IMR-90 (cell line): ENCODE measurements at regions of chr10 and their contacts with region 1.

Region 1: GRCh38 chr10:68301790-68302502 is 29.9 kb upstream of the HNRNPH3 start:
- DNase-seq: peak; percentile 75
- ATAC-seq: peak; percentile 97
- H3K4me3 ChIP-seq: no peak overlapping the region
- H3K27ac ChIP-seq: no peak overlapping the region
- H3K4me1 ChIP-seq: peaks cover 4% of the 10 kb centered on the region; the same call in 1 of the 2 replicates
- H3K27me3 ChIP-seq: no peaks in the 10 kb centered on the region
- CTCF ChIP-seq: peak; percentile 74
- POLR2A ChIP-seq: no peak
- RAD21 ChIP-seq: peak; percentile 75

Region 2: DNA sequence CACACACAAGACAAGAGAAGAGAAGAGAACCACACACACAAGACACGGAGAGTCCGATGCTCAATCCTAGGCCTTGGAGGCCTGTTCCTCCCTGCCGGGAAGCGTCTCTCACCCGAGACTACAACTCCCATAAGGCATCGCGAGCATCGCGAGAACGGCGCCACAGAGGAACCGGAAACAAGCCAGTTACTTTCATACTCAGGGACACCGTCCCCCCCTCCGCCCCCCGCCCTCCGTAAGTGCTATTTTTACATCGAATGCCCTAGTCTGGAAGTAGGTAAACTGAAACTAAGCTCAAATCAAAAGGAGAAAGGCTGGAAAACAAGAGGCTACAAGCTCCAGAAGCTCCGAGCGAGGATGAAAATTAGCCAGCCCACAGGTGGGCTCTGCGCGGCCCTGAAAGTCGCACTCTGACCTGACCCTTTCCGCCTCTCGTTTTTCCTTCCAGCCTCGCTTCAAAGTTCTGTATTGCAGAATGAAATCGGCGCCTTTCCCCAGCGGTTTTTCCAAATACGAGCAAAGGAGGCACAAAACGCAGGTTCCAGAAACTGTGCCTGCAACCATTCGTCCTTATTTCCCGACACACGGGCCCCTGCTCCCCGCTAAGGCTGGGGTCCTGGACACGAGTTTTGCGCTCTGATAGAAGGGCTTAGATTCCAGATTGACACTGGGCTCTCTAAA is 452.5 kb before region 1 on chr10:
- CTCF ChIA-PET with region 1: no interaction called
- POLR2A ChIA-PET with region 1: no interaction called
- dilution Hi-C with region 1: no loop called
- in situ Hi-C with region 1: loop called (anchors 25 kb)
- intact Hi-C with region 1: no loop called
- DNase-seq: peak; percentile 95
- ATAC-seq: peak; percentile 98
- H3K4me3 ChIP-seq: peak overlapping the region; percentile 61
- H3K27ac ChIP-seq: peak overlapping the region; percentile 87
- H3K4me1 ChIP-seq: no peaks in the 10 kb centered on the region
- H3K27me3 ChIP-seq: no peaks in the 10 kb centered on the region
- CTCF ChIP-seq: no peak
- POLR2A ChIP-seq: no peak
- RAD21 ChIP-seq: no peak

Region 3: DNA sequence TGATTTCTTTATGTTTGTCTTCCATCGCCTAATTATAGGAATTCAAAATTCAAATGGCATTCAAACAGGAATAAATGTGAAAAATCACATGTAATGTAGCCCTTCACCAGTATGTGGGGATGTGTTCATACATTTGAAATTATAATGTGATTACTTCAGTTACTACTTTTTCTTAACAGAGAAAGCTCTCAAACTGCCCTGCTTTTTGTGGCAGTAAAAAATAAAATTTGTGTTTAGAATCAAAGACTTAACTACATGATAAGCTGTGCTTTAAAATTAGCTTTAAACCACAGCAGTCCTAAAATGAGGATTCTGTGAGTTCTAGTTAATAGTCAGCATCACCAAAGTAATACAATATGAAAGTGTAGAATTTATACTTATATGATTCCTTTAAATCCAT is 219.1 kb before region 1 on chr10:
- CTCF ChIA-PET with region 1: interaction called, 5 read pairs
- POLR2A ChIA-PET with region 1: no interaction called
- dilution Hi-C with region 1: no loop called
- in situ Hi-C with region 1: loop called (anchors 5 kb)
- intact Hi-C with region 1: loop called (anchors 1 kb)
- DNase-seq: peak; percentile 67
- ATAC-seq: peak; percentile 79
- H3K4me3 ChIP-seq: no peak overlapping the region
- H3K27ac ChIP-seq: peak overlapping the region; percentile 23; the same call in 1 of the 2 replicates
- H3K4me1 ChIP-seq: peaks cover 10% of the 10 kb centered on the region
- H3K27me3 ChIP-seq: no peaks in the 10 kb centered on the region
- CTCF ChIP-seq: peak; percentile 77
- POLR2A ChIP-seq: no peak
- RAD21 ChIP-seq: peak; percentile 83

Region 4: GRCh38 chr10:68088744-68089143 is 213.2 kb before region 1 on chr10:
- CTCF ChIA-PET with region 1: interaction called, 4 read pairs
- POLR2A ChIA-PET with region 1: no interaction called
- dilution Hi-C with region 1: no loop called
- in situ Hi-C with region 1: loop called (anchors 5 kb)
- intact Hi-C with region 1: loop called (anchors 1 kb)
- DNase-seq: peak; percentile 87
- ATAC-seq: peak; percentile 15
- H3K4me3 ChIP-seq: peak overlapping the region; percentile 28; the same call in 1 of the 2 replicates
- H3K27ac ChIP-seq: peak overlapping the region; percentile 19
- H3K4me1 ChIP-seq: peaks cover 15% of the 10 kb centered on the region
- H3K27me3 ChIP-seq: no peaks in the 10 kb centered on the region
- CTCF ChIP-seq: no peak
- POLR2A ChIP-seq: no peak
- RAD21 ChIP-seq: no peak

Region 5: GRCh38 chr10:68208424-68209042 is 93.4 kb before region 1 on chr10:
- CTCF ChIA-PET with region 1: interaction called, 28 read pairs
- POLR2A ChIA-PET with region 1: no interaction called
- dilution Hi-C with region 1: no loop called
- in situ Hi-C with region 1: no loop called
- intact Hi-C with region 1: loop called (anchors 1 kb)
- DNase-seq: peak; percentile 79
- ATAC-seq: peak; percentile 94
- H3K4me3 ChIP-seq: no peak overlapping the region
- H3K27ac ChIP-seq: no peak overlapping the region
- H3K4me1 ChIP-seq: peaks cover 2% of the 10 kb centered on the region
- H3K27me3 ChIP-seq: no peaks in the 10 kb centered on the region
- CTCF ChIP-seq: peak; percentile 76
- POLR2A ChIP-seq: no peak
- RAD21 ChIP-seq: peak; percentile 87

Region 6: GRCh38 chr10:68218786-68219185 is 83.2 kb before region 1 on chr10:
- CTCF ChIA-PET with region 1: interaction called, 6 read pairs
- POLR2A ChIA-PET with region 1: no interaction called
- dilution Hi-C with region 1: no loop called
- in situ Hi-C with region 1: loop called (anchors 5 kb)
- intact Hi-C with region 1: no loop called
- DNase-seq: no peak
- ATAC-seq: no peak
- H3K4me3 ChIP-seq: no peak overlapping the region
- H3K27ac ChIP-seq: no peak overlapping the region
- H3K4me1 ChIP-seq: peaks cover 1% of the 10 kb centered on the region; the same call in 1 of the 2 replicates
- H3K27me3 ChIP-seq: no peaks in the 10 kb centered on the region
- CTCF ChIP-seq: no peak
- POLR2A ChIP-seq: no peak
- RAD21 ChIP-seq: no peak